Colonic mucosa (tissue), 4 donors: ENCODE measurements at regions of chr1 and their contacts with region 1.

Region 1: GRCh38 chr1:28602536-28603439 is 10.7 kb downstream of the RAB42 start:
- DNase-seq: peak; percentile 65
- H3K4me3 ChIP-seq: no peak overlapping the region
- H3K27ac ChIP-seq: no peak overlapping the region
- H3K4me1 ChIP-seq: no peaks in the 10 kb centered on the region
- H3K27me3 ChIP-seq: no peaks in the 10 kb centered on the region
- CTCF ChIP-seq: peak; percentile 56

Region 2: GRCh38 chr1:27990920-27991537 is 611.8 kb before region 1 on chr1:
- intact Hi-C with region 1: no loop called
- DNase-seq: no peak
- H3K4me3 ChIP-seq: no peak overlapping the region
- H3K27ac ChIP-seq: no peak overlapping the region
- H3K4me1 ChIP-seq: no peaks in the 10 kb centered on the region
- H3K27me3 ChIP-seq: no peaks in the 10 kb centered on the region
- CTCF ChIP-seq: no peak

Region 3: GRCh38 chr1:28409090-28409489 is 193.7 kb before region 1 on chr1:
- intact Hi-C with region 1: loop called (anchors 5 kb)
- DNase-seq: no peak
- H3K4me3 ChIP-seq: no peak overlapping the region
- H3K27ac ChIP-seq: no peak overlapping the region
- H3K4me1 ChIP-seq: no peaks in the 10 kb centered on the region
- H3K27me3 ChIP-seq: no peaks in the 10 kb centered on the region
- CTCF ChIP-seq: no peak

Region 4: GRCh38 chr1:28518000-28518744 is 84.6 kb before region 1 on chr1:
- intact Hi-C with region 1: loop called (anchors 5 kb)
- DNase-seq: peak; percentile 95
- H3K4me3 ChIP-seq: peak overlapping the region; percentile 59
- H3K27ac ChIP-seq: peak overlapping the region; percentile 81
- H3K4me1 ChIP-seq: peaks cover 7% of the 10 kb centered on the region
- H3K27me3 ChIP-seq: no peaks in the 10 kb centered on the region
- CTCF ChIP-seq: peak; percentile 99